Activated B cell treated with CpG ODN at 0.5 μM for 24 hours (primary cell): ENCODE measurements at regions of chr7 and their contacts with region 1.

Region 1: GRCh38 chr7:12322284-12322902 is 81.3 kb downstream of the VWDE start:
- DNase-seq: no peak
- ATAC-seq: no peak
- H3K4me3 Mint-ChIP-seq: no peak overlapping the region
- H3K27ac Mint-ChIP-seq: no peak overlapping the region
- H3K4me1 Mint-ChIP-seq: no peaks in the 10 kb centered on the region
- H3K27me3 Mint-ChIP-seq: no peaks in the 10 kb centered on the region
- CTCF ChIP-seq: peak; percentile 93

Region 2: DNA sequence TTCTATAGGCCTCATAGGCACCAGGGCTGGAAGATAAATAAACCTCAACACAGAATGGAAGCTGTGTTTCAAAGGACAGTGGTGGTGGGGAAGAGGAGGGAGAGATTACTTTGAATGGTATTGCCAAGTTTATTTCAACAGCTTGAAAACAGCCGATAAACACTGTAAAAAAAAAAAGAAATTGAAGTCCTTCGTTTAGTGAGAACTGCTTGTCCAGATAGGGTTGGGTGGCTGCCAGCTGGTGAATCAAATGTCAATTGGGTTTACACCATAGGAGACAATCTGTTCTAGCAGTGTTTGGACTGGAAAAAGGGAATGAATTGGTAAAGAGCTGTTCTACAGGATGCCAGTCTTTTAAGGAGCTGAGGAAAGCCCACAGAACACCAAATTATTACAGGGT is 1093.9 kb before region 1 on chr7:
- CTCF ChIA-PET with region 1: no interaction called
- POLR2A ChIA-PET with region 1: no interaction called
- intact Hi-C with region 1: no loop called
- DNase-seq: no peak
- ATAC-seq: no peak
- H3K4me3 Mint-ChIP-seq: no peak overlapping the region
- H3K27ac Mint-ChIP-seq: no peak overlapping the region
- H3K4me1 Mint-ChIP-seq: no peaks in the 10 kb centered on the region
- H3K27me3 Mint-ChIP-seq: no peaks in the 10 kb centered on the region
- CTCF ChIP-seq: no peak

Region 3: DNA sequence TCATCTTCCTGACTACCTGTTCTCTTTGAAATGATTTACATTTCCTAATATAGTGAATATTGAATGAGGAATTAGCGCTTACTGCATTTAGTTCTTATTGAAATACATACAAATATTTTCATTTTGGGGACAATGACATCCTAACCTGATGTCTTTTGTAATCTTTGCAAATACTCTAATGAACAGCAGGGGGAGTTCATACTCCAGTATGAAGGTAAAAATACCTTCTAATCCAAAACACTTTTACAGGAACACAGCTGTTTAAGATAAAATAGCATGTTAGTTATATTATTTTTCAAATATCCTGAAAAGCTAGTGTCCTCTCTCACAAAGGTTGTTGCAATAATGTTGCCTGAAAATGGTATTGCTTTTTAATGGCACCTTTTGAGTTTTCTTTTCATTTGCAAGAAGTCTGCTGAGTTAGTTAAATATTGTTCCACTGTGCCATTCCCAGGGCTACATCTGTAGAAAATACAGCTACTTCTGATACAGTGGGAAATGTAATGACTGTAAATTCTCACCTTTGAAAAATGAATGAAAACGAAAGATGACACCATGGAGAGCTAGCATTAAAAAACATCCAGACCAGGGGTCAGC is 948.7 kb before region 1 on chr7:
- CTCF ChIA-PET with region 1: interaction called, 3 read pairs
- POLR2A ChIA-PET with region 1: no interaction called
- intact Hi-C with region 1: loop called (anchors 1 kb)
- DNase-seq: no peak
- ATAC-seq: no peak
- H3K4me3 Mint-ChIP-seq: no peak overlapping the region
- H3K27ac Mint-ChIP-seq: no peak overlapping the region
- H3K4me1 Mint-ChIP-seq: no peaks in the 10 kb centered on the region
- H3K27me3 Mint-ChIP-seq: peaks cover 1% of the 10 kb centered on the region
- CTCF ChIP-seq: no peak

Region 4: DNA sequence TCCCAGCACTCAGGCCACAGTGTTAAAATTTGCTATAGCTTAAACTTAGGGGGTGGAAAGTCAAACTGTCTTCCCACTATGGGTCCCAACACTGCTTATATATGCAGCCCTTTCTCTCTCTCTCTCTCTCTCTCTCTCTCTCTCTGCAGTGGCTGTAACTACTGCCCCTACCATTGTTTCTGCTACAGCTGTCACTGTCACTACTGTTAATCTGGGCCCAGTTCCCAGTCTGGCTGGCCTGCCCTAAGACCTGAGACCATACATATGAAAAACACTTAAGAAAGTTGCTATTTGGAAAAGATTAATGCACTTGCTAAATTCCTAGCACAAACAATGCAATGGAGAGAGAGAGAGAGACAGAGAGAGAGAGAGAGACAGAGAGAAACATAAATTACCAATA is 569.0 kb before region 1 on chr7:
- CTCF ChIA-PET with region 1: no interaction called
- POLR2A ChIA-PET with region 1: no interaction called
- intact Hi-C with region 1: loop called (anchors 10 kb)
- DNase-seq: no peak
- ATAC-seq: no peak
- H3K4me3 Mint-ChIP-seq: no peak overlapping the region
- H3K27ac Mint-ChIP-seq: no peak overlapping the region
- H3K4me1 Mint-ChIP-seq: no peaks in the 10 kb centered on the region
- H3K27me3 Mint-ChIP-seq: no peaks in the 10 kb centered on the region
- CTCF ChIP-seq: no peak

Region 5: DNA sequence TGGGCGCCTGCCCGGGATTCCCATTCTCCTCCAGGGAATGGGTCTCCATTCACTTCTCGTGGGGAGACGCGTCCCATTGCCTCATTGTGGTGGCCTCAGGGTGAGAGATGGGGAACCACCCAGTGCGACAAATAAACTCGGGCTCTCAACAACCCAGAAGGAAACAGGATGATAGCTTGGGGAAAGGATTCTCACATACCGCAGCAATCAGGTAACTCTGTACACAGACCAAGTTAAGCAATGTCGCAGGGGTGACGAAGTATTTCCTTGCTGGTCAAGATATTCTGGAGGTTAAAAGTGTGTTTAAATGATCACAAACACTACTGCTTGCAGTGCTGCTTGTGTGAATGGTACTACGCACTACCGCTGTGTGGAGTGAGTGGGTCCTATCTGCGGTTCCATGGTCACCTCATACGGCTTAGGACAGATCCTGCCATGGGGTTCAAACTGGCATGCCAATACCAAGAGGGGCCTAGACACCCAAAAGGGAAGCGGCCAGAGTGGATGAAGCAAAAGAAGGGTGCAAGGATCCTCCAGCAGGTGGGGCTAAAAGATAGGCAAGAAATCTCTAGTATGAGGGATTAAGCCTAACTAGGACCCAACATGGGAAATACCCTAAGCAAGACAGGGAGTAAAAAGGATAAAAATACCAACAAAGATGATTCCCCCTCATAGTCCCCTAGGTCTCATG is 255.1 kb before region 1 on chr7:
- CTCF ChIA-PET with region 1: interaction called, 18 read pairs
- POLR2A ChIA-PET with region 1: no interaction called
- intact Hi-C with region 1: loop called (anchors 1 kb)
- DNase-seq: no peak
- ATAC-seq: peak; percentile 50
- H3K4me3 Mint-ChIP-seq: no peak overlapping the region
- H3K27ac Mint-ChIP-seq: no peak overlapping the region
- H3K4me1 Mint-ChIP-seq: peaks cover 8% of the 10 kb centered on the region
- H3K27me3 Mint-ChIP-seq: no peaks in the 10 kb centered on the region
- CTCF ChIP-seq: no peak